ENCODE measurements at regions of chr17 and their contacts with region 1.

Region 1: DNA sequence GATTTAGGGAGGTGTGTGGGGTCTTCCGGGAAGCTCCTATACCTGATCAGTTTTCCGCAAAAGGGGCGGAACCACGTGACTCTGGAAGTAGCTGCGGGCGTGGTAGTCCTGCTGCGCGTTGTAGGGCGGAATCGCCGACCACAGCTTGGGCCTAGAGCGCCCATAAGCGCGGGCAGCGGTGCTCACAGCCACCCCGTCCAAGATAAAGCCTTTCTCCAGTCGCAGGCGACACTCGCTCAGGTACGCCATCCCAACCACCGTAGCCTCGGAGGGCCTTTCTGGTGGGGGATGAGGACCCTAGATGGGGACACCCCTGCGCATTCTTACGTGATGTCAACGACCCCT is 12.4 kb downstream of the RPL23 start:
- DNase-seq: no peak
- H3K4me3 ChIP-seq: no peak overlapping the region
- CTCF ChIP-seq: no peak

Region 2: DNA sequence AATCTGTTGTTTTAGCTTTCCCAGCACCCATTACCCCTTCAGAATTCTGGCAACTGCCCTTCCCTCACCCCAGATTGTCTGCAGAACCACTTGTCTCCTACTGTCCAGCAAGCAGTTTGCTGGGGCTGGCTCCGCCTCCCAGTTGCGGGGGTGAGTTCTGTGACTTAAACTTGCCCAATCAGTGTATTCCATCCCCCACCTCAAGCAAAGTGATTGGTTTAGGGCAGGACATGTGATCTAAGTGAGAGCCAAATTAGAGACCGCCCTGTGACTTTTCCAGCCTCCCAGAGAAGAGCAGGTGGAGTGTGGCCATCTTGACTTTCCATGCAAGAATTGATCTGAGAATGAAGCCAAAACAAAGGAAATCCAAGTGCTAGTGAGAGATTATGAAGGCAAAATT is 212.7 kb before region 1 on chr17:
- CTCF ChIA-PET with region 1: no interaction called
- POLR2A ChIA-PET with region 1: no interaction called
- DNase-seq: no peak
- H3K4me3 ChIP-seq: no peak overlapping the region
- CTCF ChIP-seq: no peak

Region 3: GRCh38 chr17:38824899-38825761 is 16.0 kb before region 1 on chr17 and contains the start of gene CWC25:
- CTCF ChIA-PET with region 1: interaction called, 3 read pairs
- POLR2A ChIA-PET with region 1: interaction called, 10 read pairs
- DNase-seq: peak; percentile 78
- H3K4me3 ChIP-seq: peak within 1 kb of the TSS; percentile 70
- CTCF ChIP-seq: no peak

Region 4: DNA sequence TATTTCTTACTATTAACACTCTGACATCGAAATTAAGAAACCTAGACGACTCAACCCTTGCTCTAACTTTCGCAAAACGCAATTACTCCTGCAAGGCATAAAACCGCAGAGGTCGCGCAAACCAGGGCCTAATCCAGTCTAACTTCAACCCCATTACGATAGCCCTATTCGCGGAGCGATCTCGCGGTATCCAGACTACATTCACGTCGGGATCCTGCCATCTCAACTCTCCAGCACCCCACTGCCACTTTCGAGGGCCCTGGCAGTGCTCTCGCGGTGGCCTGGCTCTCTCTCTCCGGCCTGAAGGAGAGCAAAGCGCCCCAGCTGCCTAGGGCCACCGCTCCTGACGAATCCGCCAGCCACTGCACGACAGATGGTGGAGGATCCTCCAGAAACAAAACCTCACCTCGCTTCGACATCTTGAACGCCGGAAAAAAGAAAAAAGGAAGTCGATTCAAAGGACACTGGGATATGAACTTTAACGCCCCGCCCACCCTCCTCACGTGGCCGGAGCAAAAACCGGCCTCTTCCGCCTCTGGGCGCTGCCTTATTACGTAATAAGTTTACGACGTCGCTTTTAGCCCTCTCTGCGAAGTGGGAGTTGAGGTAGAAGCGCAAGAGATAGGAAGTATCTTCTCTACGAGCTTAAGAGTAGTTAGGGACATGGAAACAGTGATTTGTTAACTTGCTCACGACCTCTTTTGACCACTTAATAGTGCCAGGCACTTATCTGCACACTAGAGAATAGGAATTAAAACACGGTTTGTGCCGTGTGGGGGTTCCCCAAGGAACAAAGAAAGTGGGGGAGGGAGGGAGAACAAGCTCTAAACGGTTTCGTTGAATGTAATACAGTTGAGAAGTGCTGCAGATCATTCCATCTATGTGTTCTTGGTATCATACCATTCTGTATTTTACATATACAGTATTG is 12.4 kb after region 1 on chr17 and contains the start of gene RPL23:
- CTCF ChIA-PET with region 1: no interaction called
- POLR2A ChIA-PET with region 1: interaction called, 15 read pairs
- DNase-seq: peak; percentile 79
- H3K4me3 ChIP-seq: peak within 1 kb of the TSS; percentile 68
- CTCF ChIP-seq: no peak

Region 5: DNA sequence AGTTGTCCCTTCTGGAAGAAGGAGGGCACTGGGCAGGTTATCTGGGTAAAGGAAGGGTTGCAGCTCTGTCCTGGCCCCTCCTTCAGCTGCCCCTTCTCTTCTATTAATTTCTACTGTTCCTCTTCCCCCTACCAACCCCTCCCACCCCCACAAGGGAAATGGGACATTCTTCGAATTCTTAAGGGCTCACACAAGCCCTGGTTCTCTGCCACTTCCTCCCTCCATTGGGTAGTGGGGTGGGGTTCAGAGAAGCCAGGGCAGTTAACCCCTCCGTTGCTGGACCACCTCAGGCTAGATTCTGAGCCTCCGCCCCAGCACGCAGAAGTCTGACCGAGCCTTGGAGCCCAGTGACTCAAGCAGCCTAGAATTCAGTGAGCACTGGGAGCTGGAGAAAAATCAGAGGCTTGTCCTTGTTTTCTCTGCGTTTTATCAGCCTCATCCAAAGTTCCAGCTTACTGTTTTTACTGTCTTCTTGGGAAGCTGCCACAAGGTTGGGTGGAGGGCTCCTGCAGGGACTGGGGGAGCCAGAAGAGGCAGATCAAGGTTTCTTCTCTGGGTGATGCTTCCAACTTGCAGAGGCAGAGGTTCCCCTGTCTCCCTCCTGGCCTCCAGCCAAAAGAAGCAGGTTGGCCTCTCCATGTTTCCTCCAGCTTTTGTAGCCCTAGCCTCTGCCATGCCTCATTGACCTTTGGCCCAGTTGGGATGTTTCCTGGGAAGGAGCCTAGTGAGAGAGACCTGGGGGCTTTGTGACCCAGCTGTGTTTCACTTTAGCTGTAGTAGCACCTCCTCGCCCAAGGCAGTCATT is 39.0 kb after region 1 on chr17:
- CTCF ChIA-PET with region 1: no interaction called
- POLR2A ChIA-PET with region 1: no interaction called
- DNase-seq: no peak
- H3K4me3 ChIP-seq: peak overlapping the region; percentile 29
- CTCF ChIP-seq: no peak

Region 6: DNA sequence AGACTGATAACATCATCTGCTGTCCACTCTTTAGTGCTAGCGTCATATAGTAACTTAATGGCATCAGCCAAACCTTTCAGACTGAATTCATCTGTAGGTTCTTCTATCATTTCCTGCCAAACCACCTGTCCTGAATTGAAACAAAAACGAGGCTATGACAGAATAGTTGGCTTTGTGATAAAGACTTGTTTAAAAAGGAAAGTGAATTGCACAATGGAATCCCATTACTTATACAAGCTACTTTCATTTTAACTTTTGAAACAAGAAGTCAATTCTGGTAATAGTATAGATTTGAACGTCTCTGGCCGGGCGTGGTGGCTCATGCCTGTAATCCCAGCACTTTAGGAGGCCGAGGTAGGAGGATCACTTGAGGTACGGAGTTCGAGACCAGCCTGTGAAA is 102.5 kb after region 1 on chr17:
- CTCF ChIA-PET with region 1: no interaction called
- POLR2A ChIA-PET with region 1: no interaction called
- DNase-seq: no peak
- H3K4me3 ChIP-seq: no peak overlapping the region
- CTCF ChIP-seq: no peak

Measured in AG04449 (cell line).